ENCODE measurements at regions of chr19 and their contacts with region 1.

Region 1: GRCh38 chr19:39539519-39540332 is at the start of gene EID2:
- DNase-seq: peak; percentile 93
- ATAC-seq: peak; percentile 95
- H3K4me3 ChIP-seq: peak within 1 kb of the TSS; percentile 89
- H3K27ac ChIP-seq: peak within 1 kb of the TSS; percentile 95
- H3K4me1 ChIP-seq: no peaks in the 10 kb centered on the region
- H3K27me3 ChIP-seq: no peaks in the 10 kb centered on the region
- CTCF ChIP-seq: peak; percentile 85
- POLR2A ChIP-seq: peak; percentile 73
- RAD21 ChIP-seq: peak; percentile 50
- total RNA-seq, gene EID2: 5.7 and 6.9 TPM in 2 replicates

Region 2: GRCh38 chr19:38263689-38264485 is 1275.8 kb before region 1 on chr19:
- CTCF ChIA-PET with region 1: no interaction called
- POLR2A ChIA-PET with region 1: no interaction called
- dilution Hi-C with region 1: no loop called
- in situ Hi-C with region 1: no loop called
- intact Hi-C with region 1: no loop called
- DNase-seq: peak; percentile 45
- ATAC-seq: peak; percentile 75
- H3K4me3 ChIP-seq: peak overlapping the region; percentile 15
- H3K27ac ChIP-seq: no peak overlapping the region
- H3K4me1 ChIP-seq: peaks cover 10% of the 10 kb centered on the region
- H3K27me3 ChIP-seq: no peaks in the 10 kb centered on the region; the same call in 1 of the 2 replicates
- CTCF ChIP-seq: no peak
- POLR2A ChIP-seq: no peak
- RAD21 ChIP-seq: no peak

Region 3: GRCh38 chr19:39469036-39469435 is 70.7 kb before region 1 on chr19:
- CTCF ChIA-PET with region 1: no interaction called
- POLR2A ChIA-PET with region 1: no interaction called
- dilution Hi-C with region 1: no loop called
- in situ Hi-C with region 1: no loop called
- intact Hi-C with region 1: no loop called
- DNase-seq: no peak
- ATAC-seq: no peak
- H3K4me3 ChIP-seq: no peak overlapping the region
- H3K27ac ChIP-seq: no peak overlapping the region
- H3K4me1 ChIP-seq: no peaks in the 10 kb centered on the region
- H3K27me3 ChIP-seq: no peaks in the 10 kb centered on the region
- CTCF ChIP-seq: no peak
- POLR2A ChIP-seq: no peak
- RAD21 ChIP-seq: no peak

Region 4: GRCh38 chr19:39480337-39481228 is 59.1 kb before region 1 on chr19 and contains the start of gene TIMM50:
- CTCF ChIA-PET with region 1: no interaction called
- POLR2A ChIA-PET with region 1: no interaction called
- dilution Hi-C with region 1: no loop called
- in situ Hi-C with region 1: no loop called
- intact Hi-C with region 1: no loop called
- DNase-seq: peak; percentile 88
- ATAC-seq: peak; percentile 99
- H3K4me3 ChIP-seq: peak within 1 kb of the TSS; percentile 75
- H3K27ac ChIP-seq: peak within 1 kb of the TSS; percentile 88
- H3K4me1 ChIP-seq: peaks cover 9% of the 10 kb centered on the region
- H3K27me3 ChIP-seq: no peaks in the 10 kb centered on the region
- CTCF ChIP-seq: no peak
- POLR2A ChIP-seq: peak; percentile 83
- RAD21 ChIP-seq: no peak
- total RNA-seq, gene TIMM50: 52.0 and 53.3 TPM in 2 replicates

Region 5: GRCh38 chr19:39824143-39825092 is 284.7 kb after region 1 on chr19:
- CTCF ChIA-PET with region 1: no interaction called
- POLR2A ChIA-PET with region 1: no interaction called
- dilution Hi-C with region 1: no loop called
- in situ Hi-C with region 1: no loop called
- intact Hi-C with region 1: loop called (anchors 5 kb)
- DNase-seq: peak; percentile 91
- ATAC-seq: peak; percentile 98
- H3K4me3 ChIP-seq: peak overlapping the region; percentile 60
- H3K27ac ChIP-seq: peak overlapping the region; percentile 34
- H3K4me1 ChIP-seq: peaks cover 5% of the 10 kb centered on the region
- H3K27me3 ChIP-seq: no peaks in the 10 kb centered on the region
- CTCF ChIP-seq: no peak
- POLR2A ChIP-seq: peak; percentile 33; the same call in 1 of the 2 replicates
- RAD21 ChIP-seq: no peak

Region 6: DNA sequence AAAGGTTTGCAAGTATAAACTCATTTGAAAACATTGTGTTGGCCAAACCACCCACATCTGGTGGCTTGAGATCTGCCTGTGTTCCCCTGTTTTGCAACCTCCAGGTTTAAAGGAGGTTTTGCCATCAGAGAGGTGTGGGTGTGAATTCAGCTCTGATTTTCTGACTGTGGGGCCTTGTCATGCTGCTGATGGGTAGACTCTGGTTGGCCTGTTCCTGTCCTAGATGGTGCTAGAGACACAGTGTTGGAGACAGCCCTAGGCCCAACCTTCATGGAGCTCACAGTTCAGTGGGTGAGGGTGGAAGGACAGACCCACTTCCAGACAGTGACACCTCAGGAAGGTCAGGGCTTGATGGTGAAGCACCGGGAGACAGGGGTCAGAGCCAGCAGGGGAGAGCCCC is 1245.8 kb after region 1 on chr19:
- CTCF ChIA-PET with region 1: no interaction called
- POLR2A ChIA-PET with region 1: no interaction called
- dilution Hi-C with region 1: no loop called
- in situ Hi-C with region 1: no loop called
- intact Hi-C with region 1: no loop called
- DNase-seq: no peak
- ATAC-seq: no peak
- H3K4me3 ChIP-seq: no peak overlapping the region
- H3K27ac ChIP-seq: no peak overlapping the region
- H3K4me1 ChIP-seq: no peaks in the 10 kb centered on the region
- H3K27me3 ChIP-seq: no peaks in the 10 kb centered on the region
- CTCF ChIP-seq: no peak
- POLR2A ChIP-seq: no peak
- RAD21 ChIP-seq: no peak